Activated naive CD4-positive, alpha-beta T cell treated with anti-CD3 and anti-CD28 coated beads, Interleukin-2, amount 10 ng/mL, durations not matched to agents 7 days and 5 days (primary cell): ENCODE measurements at regions of chr6 and their contacts with region 1.

Region 1: DNA sequence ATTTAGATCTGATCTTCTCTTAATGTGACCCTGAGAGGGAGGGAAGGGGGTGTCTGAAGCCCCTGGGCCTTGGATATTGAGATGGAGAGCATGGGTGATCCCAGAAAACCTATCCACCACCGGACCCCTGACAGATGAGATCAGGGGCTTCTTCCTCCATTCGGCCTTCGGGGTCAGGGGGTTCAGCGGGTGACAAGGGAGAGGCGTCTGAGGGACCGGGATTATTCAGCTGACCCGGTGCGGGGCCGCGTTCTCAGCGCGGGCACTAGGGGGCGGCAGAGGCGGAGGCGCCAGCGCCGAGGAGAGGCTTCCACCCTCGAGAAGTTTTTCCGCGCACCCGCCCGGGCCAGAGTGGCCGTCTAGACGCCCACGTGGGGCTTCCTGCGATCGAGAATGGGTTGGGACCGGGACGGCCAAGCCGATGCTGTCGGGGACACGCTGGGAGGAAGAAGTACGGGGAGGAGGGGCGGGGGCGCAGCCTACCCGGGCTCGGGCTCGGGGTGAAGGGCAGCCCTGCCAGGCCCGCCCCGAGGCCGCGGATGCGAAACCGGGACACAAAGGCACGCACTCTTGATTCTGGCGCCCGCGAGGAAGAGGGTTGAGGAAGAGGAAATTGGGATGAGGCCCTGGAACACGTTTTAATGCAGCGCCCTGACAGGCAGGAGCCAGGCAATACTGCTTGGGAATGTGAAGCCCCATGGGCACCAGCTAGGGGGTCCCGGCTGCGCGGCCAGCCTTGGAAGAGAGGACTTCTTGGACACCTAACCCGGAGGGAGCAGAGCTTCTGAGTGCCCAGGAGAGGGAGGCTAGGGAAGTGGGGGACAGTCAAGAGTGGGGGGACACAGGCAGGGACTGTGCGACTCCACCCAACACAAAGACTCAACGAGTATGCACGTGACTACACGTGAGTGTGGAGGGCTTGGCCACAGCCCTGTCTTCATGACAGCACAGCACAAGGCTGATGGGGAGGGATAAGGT is 30.6 kb downstream of the COL11A2 start:
- DNase-seq: peak; percentile 87
- H3K4me3 Mint-ChIP-seq: peak overlapping the region; percentile 77
- H3K27ac Mint-ChIP-seq: peak overlapping the region; percentile 49
- H3K4me1 Mint-ChIP-seq: peaks cover 18% of the 10 kb centered on the region
- H3K27me3 Mint-ChIP-seq: peaks cover 48% of the 10 kb centered on the region

Region 2: DNA sequence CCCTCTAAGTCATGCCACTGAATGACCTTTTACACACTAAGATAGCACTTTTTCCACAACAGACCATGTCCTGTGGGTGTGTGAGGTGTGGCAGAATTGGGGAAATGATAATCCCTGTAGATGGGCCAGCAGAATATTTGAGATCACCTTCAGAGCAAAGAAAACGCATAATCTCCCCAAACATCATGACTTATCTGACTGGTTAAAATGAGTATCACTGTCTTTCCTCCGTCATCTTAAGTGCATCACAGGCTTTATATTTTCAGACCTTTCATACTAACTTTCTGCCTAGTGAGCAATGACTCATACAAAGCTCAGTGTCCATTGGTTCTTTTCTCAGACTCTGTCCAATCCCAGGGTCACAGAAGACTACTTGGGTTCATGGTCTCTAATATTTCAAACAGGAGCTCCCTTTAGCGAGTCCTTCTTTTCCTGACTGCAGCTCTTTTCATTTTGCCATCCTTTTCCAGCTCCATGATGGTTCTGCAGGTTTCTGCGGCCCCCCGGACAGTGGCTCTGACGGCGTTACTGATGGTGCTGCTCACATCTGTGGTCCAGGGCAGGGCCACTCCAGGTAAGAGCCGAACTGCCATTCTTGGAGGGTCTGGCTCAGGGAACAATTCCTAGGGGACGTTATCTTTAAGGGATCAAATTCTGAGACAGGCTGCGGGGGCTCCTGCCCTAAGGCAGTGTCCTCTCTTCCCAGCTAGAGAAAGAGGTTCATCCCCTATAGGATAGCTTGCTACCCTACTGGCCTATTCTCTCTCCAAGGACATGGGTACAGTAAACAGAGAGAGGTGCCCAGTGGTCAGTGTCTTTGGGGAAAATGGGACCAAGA is 85.9 kb before region 1 on chr6 and contains the start of gene HLA-DPB1:
- CTCF ChIA-PET with region 1: no interaction called
- DNase-seq: no peak
- H3K4me3 Mint-ChIP-seq: peak within 1 kb of the TSS; percentile 64
- H3K27ac Mint-ChIP-seq: peak within 1 kb of the TSS; percentile 16
- H3K4me1 Mint-ChIP-seq: peaks cover 42% of the 10 kb centered on the region
- H3K27me3 Mint-ChIP-seq: peaks cover 55% of the 10 kb centered on the region

Region 3: GRCh38 chr6:33147807-33148666 is 13.6 kb before region 1 on chr6:
- CTCF ChIA-PET with region 1: interaction called, 10 read pairs
- DNase-seq: no peak
- H3K4me3 Mint-ChIP-seq: no peak overlapping the region
- H3K27ac Mint-ChIP-seq: no peak overlapping the region
- H3K4me1 Mint-ChIP-seq: no peaks in the 10 kb centered on the region
- H3K27me3 Mint-ChIP-seq: peaks cover 39% of the 10 kb centered on the region

Region 4: GRCh38 chr6:33197431-33198048 is 35.9 kb after region 1 on chr6:
- CTCF ChIA-PET with region 1: interaction called, 15 read pairs
- DNase-seq: peak; percentile 49
- H3K4me3 Mint-ChIP-seq: peak overlapping the region; percentile 98
- H3K27ac Mint-ChIP-seq: peak overlapping the region; percentile 56
- H3K4me1 Mint-ChIP-seq: peaks cover 54% of the 10 kb centered on the region
- H3K27me3 Mint-ChIP-seq: peaks cover 13% of the 10 kb centered on the region